ENCODE measurements at regions of chr16 and their contacts with region 1.

Region 1: DNA sequence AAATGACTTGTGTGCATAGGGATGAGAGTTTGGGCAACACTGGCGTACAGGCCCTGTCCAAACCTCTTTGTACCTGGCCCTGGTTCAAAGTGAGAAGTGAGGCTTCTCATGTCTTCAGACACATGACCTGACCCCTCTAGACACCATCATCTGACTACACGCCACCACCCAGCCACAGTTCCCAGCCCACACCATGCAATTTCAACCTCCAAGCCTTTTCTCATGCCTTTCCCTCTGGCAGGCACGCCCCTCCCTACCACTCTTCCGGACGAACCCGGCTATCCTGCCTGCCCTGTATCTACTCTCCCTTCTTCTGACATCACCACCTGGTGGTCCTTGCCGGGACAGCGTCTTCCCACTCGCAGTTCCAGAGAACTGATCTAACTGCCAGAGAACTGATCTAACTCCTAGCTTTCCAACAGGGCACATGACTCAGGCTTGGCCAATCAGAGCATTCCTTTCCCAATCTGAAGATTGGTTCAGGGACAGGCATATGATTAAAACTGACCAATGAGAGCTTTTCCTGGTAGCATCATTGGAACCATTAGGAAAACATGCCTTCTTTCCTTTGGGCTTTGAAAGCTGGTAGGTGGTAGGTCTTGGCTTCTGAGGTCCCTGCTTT is 27.1 kb upstream of the IL21R start:
- DNase-seq: peak; percentile 81 to 87
- ATAC-seq: peak; percentile 90 to 98
- H3K4me3 ChIP-seq: no peak overlapping the region
- H3K27ac ChIP-seq: no peak overlapping the region; a peak in 1 of 6 replicates
- H3K4me1 ChIP-seq: no peaks in the 10 kb centered on the region
- CTCF ChIP-seq: peak; percentile 16; the same call in 1 of the 3 replicates
- EP300 ChIP-seq: no peak
- POLR2A ChIP-seq: no peak
- RAD21 ChIP-seq: peak; percentile 16 to 37; a peak in 2 of 5 replicates

Region 2: DNA sequence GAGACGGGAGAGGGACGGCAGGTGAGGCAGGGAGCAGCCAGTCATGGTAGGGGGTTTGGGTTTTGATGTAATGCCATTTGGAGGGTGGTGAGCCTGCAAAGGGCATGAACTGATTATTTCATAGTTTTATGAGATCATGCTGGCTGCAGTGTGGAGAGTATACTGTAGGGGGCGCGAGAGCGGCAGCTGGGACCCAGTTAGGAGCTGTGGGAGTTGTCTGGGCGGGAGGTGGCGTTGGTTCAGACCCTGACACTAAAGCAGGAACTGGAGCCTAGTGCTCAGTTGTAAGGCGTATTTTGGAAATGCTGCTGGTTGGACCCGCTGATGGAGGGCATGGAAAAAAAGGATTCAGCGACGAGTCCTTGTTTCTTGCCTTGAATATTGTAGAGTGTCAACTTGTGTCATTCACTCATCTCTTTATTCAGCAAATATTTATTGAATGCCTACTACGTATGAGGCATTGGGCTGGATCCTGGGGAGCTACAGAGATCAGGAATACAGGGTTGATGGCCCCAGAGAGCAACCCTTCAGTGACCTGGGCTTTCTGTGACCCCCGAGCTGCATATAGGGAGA is 195.3 kb before region 1 on chr16:
- CTCF ChIA-PET with region 1: interaction called, 57 read pairs
- POLR2A ChIA-PET with region 1: no interaction called
- DNase-seq: peak; percentile 58 to 69
- ATAC-seq: peak; percentile 54 to 83; a peak in 4 of 6 replicates
- H3K4me3 ChIP-seq: no peak overlapping the region
- H3K27ac ChIP-seq: no peak overlapping the region
- H3K4me1 ChIP-seq: peaks cover 8% of the 10 kb centered on the region
- CTCF ChIP-seq: peak; percentile 55
- EP300 ChIP-seq: no peak
- POLR2A ChIP-seq: no peak
- RAD21 ChIP-seq: peak; percentile 47 to 73

Measured in A549 (cell line).